Activated CD8-positive, alpha-beta T cell treated with anti-CD3 and anti-CD28 coated beads, Interleukin-2, amount 10 ng/mL, durations not matched to agents 7 days and 5 days (primary cell): ENCODE measurements at regions of chr6 and their contacts with region 1.

Region 1: GRCh38 chr6:2848851-2849250 is 7.2 kb upstream of the SERPINB1 start:
- DNase-seq: peak; percentile 81
- ATAC-seq: peak; percentile 72
- H3K4me3 Mint-ChIP-seq: peak overlapping the region; percentile 3
- H3K27ac Mint-ChIP-seq: peak overlapping the region; percentile 68
- H3K4me1 Mint-ChIP-seq: peaks cover 53% of the 10 kb centered on the region
- H3K27me3 Mint-ChIP-seq: no peaks in the 10 kb centered on the region

Region 2: DNA sequence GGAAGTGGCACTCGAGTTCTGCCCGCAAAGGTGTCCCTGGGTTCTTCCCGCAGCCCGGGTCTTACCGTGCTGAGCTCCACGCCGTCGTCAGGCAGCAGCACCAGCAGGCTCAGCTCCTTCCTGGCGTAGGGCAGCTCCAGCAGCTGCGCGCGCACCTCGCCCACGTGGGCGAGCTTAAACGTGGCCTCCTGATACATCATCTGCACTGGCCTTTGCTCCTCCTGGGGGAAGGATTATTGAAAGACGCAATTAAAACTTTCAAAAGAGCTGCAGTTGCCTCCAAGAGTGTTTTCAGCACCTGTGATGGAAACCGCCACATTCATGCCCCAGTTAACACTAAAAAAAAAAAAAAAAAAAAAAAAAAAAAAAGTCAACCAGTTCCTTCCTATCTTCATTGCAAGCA is 42.9 kb after region 1 on chr6:
- CTCF ChIA-PET with region 1: interaction called, 48 read pairs
- POLR2A ChIA-PET with region 1: interaction called, 4 read pairs
- DNase-seq: peak; percentile 78
- ATAC-seq: peak; percentile 92
- H3K4me3 Mint-ChIP-seq: peak overlapping the region; percentile 67
- H3K27ac Mint-ChIP-seq: peak overlapping the region; percentile 78
- H3K4me1 Mint-ChIP-seq: peaks cover 37% of the 10 kb centered on the region
- H3K27me3 Mint-ChIP-seq: no peaks in the 10 kb centered on the region

Region 3: GRCh38 chr6:2911171-2911570 is 62.3 kb after region 1 on chr6:
- CTCF ChIA-PET with region 1: interaction called, 83 read pairs
- POLR2A ChIA-PET with region 1: interaction called, 3 read pairs
- DNase-seq: no peak
- ATAC-seq: no peak
- H3K4me3 Mint-ChIP-seq: no peak overlapping the region
- H3K27ac Mint-ChIP-seq: no peak overlapping the region
- H3K4me1 Mint-ChIP-seq: peaks cover 41% of the 10 kb centered on the region
- H3K27me3 Mint-ChIP-seq: no peaks in the 10 kb centered on the region

Region 4: DNA sequence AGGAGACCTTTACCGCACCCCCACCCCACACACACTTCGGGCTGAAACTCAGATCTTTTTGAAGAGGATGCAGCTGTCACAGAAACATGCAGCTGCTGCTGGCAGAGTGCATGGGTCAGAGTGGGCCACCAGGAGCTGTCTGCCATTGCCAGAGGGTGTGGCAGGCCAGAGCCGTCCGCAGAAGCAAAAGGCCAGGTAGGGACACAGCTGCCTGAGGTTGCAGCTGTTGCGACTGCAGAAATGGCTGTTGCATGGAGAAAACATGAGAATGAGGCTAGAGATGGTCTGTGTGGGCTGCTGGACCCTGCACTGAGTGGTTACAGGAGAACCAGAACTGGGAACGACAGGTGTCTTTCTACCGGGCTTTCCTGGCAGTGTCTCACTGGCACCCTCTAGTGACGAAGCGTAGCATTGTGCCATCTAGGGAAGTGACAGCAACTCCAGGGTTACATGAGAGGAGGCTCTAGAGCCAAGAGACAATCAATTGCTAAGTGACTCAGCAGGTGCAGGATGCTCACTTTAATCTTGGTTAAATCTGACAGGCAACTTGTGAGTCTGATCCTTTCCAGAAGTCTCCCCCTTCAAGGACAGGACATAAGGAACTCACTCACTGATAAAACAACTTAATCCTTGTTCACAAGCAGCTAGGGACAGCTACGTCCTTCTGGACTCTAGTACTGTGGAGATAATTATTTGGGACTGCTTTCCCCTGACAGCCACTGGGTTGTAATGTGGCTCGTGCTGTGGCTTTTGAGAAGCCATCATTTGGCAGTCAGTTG is 83.3 kb after region 1 on chr6:
- CTCF ChIA-PET with region 1: interaction called, 267 read pairs
- POLR2A ChIA-PET with region 1: interaction called, 8 read pairs
- DNase-seq: peak; percentile 91
- ATAC-seq: peak; percentile 91
- H3K4me3 Mint-ChIP-seq: no peak overlapping the region
- H3K27ac Mint-ChIP-seq: no peak overlapping the region
- H3K4me1 Mint-ChIP-seq: peaks cover 22% of the 10 kb centered on the region
- H3K27me3 Mint-ChIP-seq: no peaks in the 10 kb centered on the region

Region 5: GRCh38 chr6:2952557-2953095 is 103.8 kb after region 1 on chr6:
- CTCF ChIA-PET with region 1: interaction called, 16 read pairs
- POLR2A ChIA-PET with region 1: no interaction called
- DNase-seq: peak; percentile 73
- ATAC-seq: peak; percentile 92
- H3K4me3 Mint-ChIP-seq: peak overlapping the region; percentile 18
- H3K27ac Mint-ChIP-seq: peak overlapping the region; percentile 49
- H3K4me1 Mint-ChIP-seq: peaks cover 14% of the 10 kb centered on the region
- H3K27me3 Mint-ChIP-seq: no peaks in the 10 kb centered on the region